GM12878 (cell line): ENCODE measurements at regions of chr17 and their contacts with region 1.

Region 1: DNA sequence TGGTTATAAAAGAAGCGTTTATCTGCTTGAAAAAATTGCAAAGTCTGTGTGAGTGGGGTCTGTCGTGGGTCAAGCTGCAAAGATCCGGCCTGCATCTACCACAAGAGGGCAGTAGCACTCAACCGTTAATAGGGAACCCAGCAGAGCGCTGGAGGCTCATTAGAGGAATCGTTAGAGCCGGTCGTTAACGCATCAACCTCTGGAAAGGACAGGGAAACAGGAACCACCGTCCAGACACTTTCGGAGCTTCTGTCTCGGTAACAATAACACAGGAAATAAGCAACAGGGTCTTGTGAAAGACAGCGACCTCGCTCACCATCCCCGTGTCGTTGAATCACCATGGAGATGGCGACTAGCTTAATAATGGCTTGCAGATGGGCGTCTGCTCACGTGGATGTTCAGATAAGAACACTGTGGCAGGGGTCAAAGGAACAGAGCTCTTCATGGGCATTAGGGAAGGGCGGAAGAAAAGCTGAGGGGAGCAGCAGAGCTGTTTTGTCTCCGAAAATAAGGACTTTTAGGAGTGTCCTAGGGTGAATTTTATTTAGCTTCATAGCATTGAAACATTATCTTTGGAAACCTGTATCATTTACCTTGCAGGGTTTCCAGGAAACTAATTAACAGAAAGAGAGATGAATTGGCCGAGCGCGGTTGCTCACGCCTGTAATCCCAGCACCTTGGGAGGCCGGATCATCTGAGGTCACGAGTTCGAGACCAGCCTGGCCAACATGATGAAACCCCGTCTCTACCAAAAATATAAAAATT is 11.9 kb upstream of the NSRP1 start:
- DNase-seq: peak; percentile 46
- ATAC-seq: peak; percentile 100
- H3K4me3 ChIP-seq: peak overlapping the region; percentile 60; the same call in 1 of the 2 replicates
- H3K27ac ChIP-seq: no peak overlapping the region
- H3K4me1 ChIP-seq: 0 out of 2 replicates have a peak, but pooled peaks cover 3% of the 10 kb centered on the region
- H3K27me3 ChIP-seq: no peaks in the 10 kb centered on the region
- CTCF ChIP-seq: peak; percentile 87 to 90 (median 88); a peak in 5 of 6 replicates
- EP300 ChIP-seq: no peak
- POLR2A ChIP-seq: no peak
- RAD21 ChIP-seq: peak; percentile 88

Region 2: DNA sequence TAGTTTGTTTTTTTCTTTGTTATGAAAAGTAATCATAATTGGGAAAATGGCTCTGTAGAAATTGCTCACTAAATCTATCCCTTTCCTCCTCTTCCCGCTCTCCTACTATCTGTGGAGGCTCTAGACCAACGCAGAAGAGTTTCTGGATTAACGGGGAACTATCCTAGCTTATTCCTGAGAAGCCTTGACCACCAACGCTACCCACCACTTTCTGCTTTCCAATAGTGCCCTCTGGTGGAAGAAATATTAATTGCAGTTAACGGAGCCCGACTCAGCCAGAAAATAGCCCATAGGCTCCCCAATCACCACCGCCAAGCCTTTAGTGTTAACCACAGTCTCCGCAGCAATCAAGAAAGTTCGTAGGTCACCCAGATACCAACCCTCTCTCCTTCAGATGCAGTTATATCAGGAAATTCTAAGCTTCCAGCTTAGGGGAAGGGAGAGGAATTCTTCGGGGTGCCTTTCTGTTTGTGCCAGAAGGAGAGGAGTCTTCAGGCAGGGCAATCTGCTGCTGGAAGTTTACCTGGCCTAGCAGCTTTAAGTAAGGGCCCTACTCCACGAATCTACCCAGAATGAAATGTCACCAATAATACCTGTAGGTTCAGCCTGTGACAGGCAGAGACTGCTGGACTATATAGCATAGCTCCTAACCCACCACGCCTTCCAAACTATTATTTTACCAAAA is 11.2 kb before region 1 on chr17:
- CTCF ChIA-PET with region 1: interaction called, 96 read pairs
- POLR2A ChIA-PET with region 1: interaction called, 3 read pairs
- RAD21 ChIA-PET with region 1: interaction called, 39 read pairs
- SMC1A ChIA-PET with region 1: interaction called, 45 read pairs
- in situ Hi-C with region 1: no loop called
- intact Hi-C with region 1: no loop called
- DNase-seq: peak; percentile 32
- ATAC-seq: peak; percentile 88
- H3K4me3 ChIP-seq: no peak overlapping the region
- H3K27ac ChIP-seq: no peak overlapping the region
- H3K4me1 ChIP-seq: peaks cover 3% of the 10 kb centered on the region; the same call in 1 of the 2 replicates
- H3K27me3 ChIP-seq: no peaks in the 10 kb centered on the region; a peak in 1 of 4 replicates
- CTCF ChIP-seq: peak; percentile 63 to 82 (median 70); a peak in 5 of 6 replicates
- EP300 ChIP-seq: no peak
- POLR2A ChIP-seq: no peak
- RAD21 ChIP-seq: peak; percentile 88

Region 3: GRCh38 chr17:30161601-30162000 is 56.8 kb after region 1 on chr17:
- CTCF ChIA-PET with region 1: interaction called, 7 read pairs
- POLR2A ChIA-PET with region 1: no interaction called
- RAD21 ChIA-PET with region 1: no interaction called
- SMC1A ChIA-PET with region 1: interaction called, 13 read pairs
- in situ Hi-C with region 1: no loop called
- intact Hi-C with region 1: no loop called
- DNase-seq: no peak
- ATAC-seq: no peak
- H3K4me3 ChIP-seq: no peak overlapping the region
- H3K27ac ChIP-seq: no peak overlapping the region
- H3K4me1 ChIP-seq: no peaks in the 10 kb centered on the region; the same call in 1 of the 2 replicates
- H3K27me3 ChIP-seq: no peaks in the 10 kb centered on the region
- CTCF ChIP-seq: no peak
- EP300 ChIP-seq: no peak
- POLR2A ChIP-seq: no peak
- RAD21 ChIP-seq: no peak

Region 4: GRCh38 chr17:30212750-30213149 is 108.0 kb after region 1 on chr17:
- CTCF ChIA-PET with region 1: interaction called, 11 read pairs
- POLR2A ChIA-PET with region 1: interaction called, 4 read pairs
- RAD21 ChIA-PET with region 1: interaction called, 7 read pairs
- SMC1A ChIA-PET with region 1: interaction called, 4 read pairs
- in situ Hi-C with region 1: no loop called
- intact Hi-C with region 1: no loop called
- DNase-seq: peak; percentile 72
- ATAC-seq: peak; percentile 91
- H3K4me3 ChIP-seq: peak overlapping the region; percentile 19; the same call in 1 of the 2 replicates
- H3K27ac ChIP-seq: peak overlapping the region; percentile 85
- H3K4me1 ChIP-seq: peaks cover 36% of the 10 kb centered on the region
- H3K27me3 ChIP-seq: no peaks in the 10 kb centered on the region
- CTCF ChIP-seq: peak; percentile 0 to 47 (median 34); a peak in 3 of 6 replicates
- EP300 ChIP-seq: peak; percentile 32 to 50; a peak in 2 of 4 replicates
- POLR2A ChIP-seq: peak; percentile 49; the same call in 1 of the 2 replicates
- RAD21 ChIP-seq: 0 out of 2 replicates have a peak, but pooled peaks have one; percentile 29

Region 5: DNA sequence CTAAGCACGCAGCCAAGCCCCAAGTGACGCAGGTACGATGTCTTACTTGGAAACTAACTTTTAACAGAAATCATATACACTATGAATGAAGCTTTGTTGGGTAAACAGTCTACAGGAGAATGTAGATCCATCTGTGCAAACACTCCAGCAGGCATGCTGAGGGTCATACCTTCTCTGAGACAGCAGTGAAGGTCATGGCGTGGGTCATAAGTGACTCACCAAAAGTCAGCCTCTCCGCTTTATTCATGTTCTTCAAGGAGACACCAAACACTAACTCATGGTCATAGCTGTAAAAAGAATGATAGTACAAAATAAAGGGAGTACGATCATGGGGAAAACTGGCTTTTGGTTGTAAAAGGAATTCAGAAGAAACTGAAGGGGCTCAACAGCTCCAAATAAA is 166.3 kb after region 1 on chr17:
- CTCF ChIA-PET with region 1: interaction called, 11 read pairs
- POLR2A ChIA-PET with region 1: no interaction called
- RAD21 ChIA-PET with region 1: no interaction called
- SMC1A ChIA-PET with region 1: interaction called, 3 read pairs
- in situ Hi-C with region 1: no loop called
- intact Hi-C with region 1: no loop called
- DNase-seq: no peak
- ATAC-seq: no peak
- H3K4me3 ChIP-seq: no peak overlapping the region
- H3K27ac ChIP-seq: no peak overlapping the region
- H3K4me1 ChIP-seq: no peaks in the 10 kb centered on the region; the same call in 1 of the 2 replicates
- H3K27me3 ChIP-seq: no peaks in the 10 kb centered on the region
- CTCF ChIP-seq: no peak
- EP300 ChIP-seq: no peak
- POLR2A ChIP-seq: no peak
- RAD21 ChIP-seq: no peak

Region 6: GRCh38 chr17:30323895-30324319 is 219.2 kb after region 1 on chr17:
- CTCF ChIA-PET with region 1: interaction called, 25 read pairs
- POLR2A ChIA-PET with region 1: no interaction called
- RAD21 ChIA-PET with region 1: interaction called, 9 read pairs
- SMC1A ChIA-PET with region 1: interaction called, 16 read pairs
- in situ Hi-C with region 1: no loop called
- intact Hi-C with region 1: no loop called
- DNase-seq: no peak
- ATAC-seq: peak; percentile 86
- H3K4me3 ChIP-seq: no peak overlapping the region
- H3K27ac ChIP-seq: no peak overlapping the region
- H3K4me1 ChIP-seq: peaks cover 17% of the 10 kb centered on the region
- H3K27me3 ChIP-seq: no peaks in the 10 kb centered on the region; a peak in 1 of 4 replicates
- CTCF ChIP-seq: no peak
- EP300 ChIP-seq: no peak
- POLR2A ChIP-seq: no peak
- RAD21 ChIP-seq: no peak

Region 7: DNA sequence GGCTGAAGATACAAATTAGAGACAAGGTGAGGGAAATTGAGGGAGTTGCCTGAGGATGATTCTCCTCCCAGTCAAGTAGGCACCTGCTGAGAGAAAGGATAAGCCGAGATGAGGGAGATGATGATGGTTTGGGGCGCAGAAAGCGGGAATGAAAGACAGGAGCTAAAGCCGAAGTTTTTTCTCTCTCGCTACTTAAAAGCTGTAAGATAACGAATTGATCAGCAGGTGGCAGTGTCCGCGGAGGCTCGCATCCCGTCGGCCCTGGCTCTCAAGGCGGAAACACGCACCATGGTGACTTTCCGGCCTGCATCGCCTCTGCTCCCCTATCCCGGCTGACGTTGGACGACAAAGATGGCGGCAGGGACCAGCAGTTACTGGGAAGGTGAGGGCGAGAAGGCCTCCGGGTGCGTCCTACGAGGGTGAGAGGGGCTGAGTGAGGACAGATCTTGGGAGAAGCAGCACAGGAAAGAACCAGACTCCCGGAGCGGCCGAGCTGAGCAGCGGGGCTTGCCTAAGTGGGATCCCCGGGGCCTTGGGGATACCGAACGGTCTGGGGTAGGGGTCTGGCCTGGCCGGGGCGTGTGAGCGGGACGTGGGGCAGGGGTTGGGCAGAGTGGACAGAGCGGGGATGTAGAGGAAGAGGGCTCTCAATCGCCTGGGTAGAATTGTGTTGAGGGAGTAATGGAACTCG is 372.5 kb after region 1 on chr17 and contains the start of gene GOSR1:
- CTCF ChIA-PET with region 1: interaction called, 8 read pairs
- POLR2A ChIA-PET with region 1: no interaction called
- RAD21 ChIA-PET with region 1: interaction called, 10 read pairs
- SMC1A ChIA-PET with region 1: interaction called, 6 read pairs
- in situ Hi-C with region 1: no loop called
- intact Hi-C with region 1: loop called (anchors 10 kb)
- DNase-seq: peak; percentile 79
- ATAC-seq: peak; percentile 99
- H3K4me3 ChIP-seq: peak within 1 kb of the TSS; percentile 93
- H3K27ac ChIP-seq: peak within 1 kb of the TSS; percentile 99
- H3K4me1 ChIP-seq: peaks cover 7% of the 10 kb centered on the region
- H3K27me3 ChIP-seq: no peaks in the 10 kb centered on the region
- CTCF ChIP-seq: peak; percentile 72 to 88 (median 83)
- EP300 ChIP-seq: no peak
- POLR2A ChIP-seq: peak; percentile 100
- RAD21 ChIP-seq: peak; percentile 57
- polyA plus RNA-seq, gene GOSR1: 71.0 to 99.3 TPM

Region 8: DNA sequence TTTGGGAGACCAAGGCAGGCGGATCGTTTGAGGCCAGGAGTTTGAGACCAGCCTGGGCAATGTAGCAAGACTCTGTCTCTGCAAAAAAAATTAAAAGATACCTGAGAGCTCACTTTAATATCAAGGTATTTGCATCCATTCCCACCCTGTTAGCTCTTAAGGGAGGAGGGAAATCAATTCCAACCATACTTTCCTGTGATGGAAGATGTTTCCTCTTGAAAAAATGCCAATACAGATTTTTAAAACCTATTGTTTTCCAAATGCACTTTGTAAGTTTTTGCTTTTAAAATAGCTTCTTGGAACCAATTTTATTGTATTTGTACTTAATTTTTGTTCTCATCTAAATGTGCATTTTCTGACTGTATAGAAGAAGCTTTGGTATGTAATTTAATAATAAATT is 421.6 kb after region 1 on chr17:
- CTCF ChIA-PET with region 1: no interaction called
- POLR2A ChIA-PET with region 1: no interaction called
- RAD21 ChIA-PET with region 1: no interaction called
- SMC1A ChIA-PET with region 1: no interaction called
- in situ Hi-C with region 1: no loop called
- intact Hi-C with region 1: no loop called
- DNase-seq: no peak
- ATAC-seq: no peak
- H3K4me3 ChIP-seq: no peak overlapping the region
- H3K27ac ChIP-seq: no peak overlapping the region
- H3K4me1 ChIP-seq: no peaks in the 10 kb centered on the region
- H3K27me3 ChIP-seq: no peaks in the 10 kb centered on the region
- CTCF ChIP-seq: no peak
- EP300 ChIP-seq: no peak
- POLR2A ChIP-seq: no peak
- RAD21 ChIP-seq: no peak